Heart left ventricle (tissue), 16 donors: ENCODE measurements at regions of chr7 and their contacts with region 1.

Region 1: DNA sequence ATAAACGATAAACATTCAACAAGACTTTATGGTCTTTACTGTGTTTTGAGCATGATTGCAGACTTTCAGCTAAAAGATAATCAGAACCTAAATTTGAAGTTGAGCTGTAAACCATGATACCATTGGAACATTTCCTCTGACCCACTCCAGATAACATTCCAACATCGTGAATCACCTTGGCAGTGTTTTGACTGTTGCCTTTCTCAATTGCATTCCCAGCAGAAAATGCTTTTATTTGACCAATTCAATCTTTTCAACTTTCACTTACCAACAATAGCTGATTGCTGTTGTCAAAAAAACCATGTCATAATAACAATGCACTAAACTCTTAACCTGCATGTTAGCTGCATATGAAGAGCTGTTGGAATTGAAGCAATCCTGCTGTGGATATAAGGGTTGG is 165.5 kb downstream of the MDFIC start:
- DNase-seq: peak in 3 of 5 donors; percentile 26 to 33 (median 32)
- ATAC-seq: peak; percentile 79 to 87 (median 84)
- H3K4me3 ChIP-seq: no peak overlapping the region
- H3K27ac ChIP-seq: peak overlapping the region in 8 of 12 donors; percentile 8 to 61 (median 36)
- H3K4me1 ChIP-seq: peaks cover 0 to 32% (median 23%) of the 10 kb centered on the region in 12 donors
- H3K27me3 ChIP-seq: no peaks in the 10 kb centered on the region
- CTCF ChIP-seq: no peak
- POLR2A ChIP-seq: no peak

Region 2: GRCh38 chr7:114209968-114210367 is 877.5 kb before region 1 on chr7:
- intact Hi-C with region 1: no loop called
- DNase-seq: no peak
- ATAC-seq: no peak
- H3K4me3 ChIP-seq: no peak overlapping the region
- H3K27ac ChIP-seq: no peak overlapping the region
- H3K4me1 ChIP-seq: no peaks in the 10 kb centered on the region
- H3K27me3 ChIP-seq: no peaks in the 10 kb centered on the region
- CTCF ChIP-seq: no peak
- POLR2A ChIP-seq: no peak

Region 3: GRCh38 chr7:114979388-114979787 is 108.0 kb before region 1 on chr7:
- intact Hi-C with region 1: loop called in 3 of 10 experiments (anchors 5 to 10 kb)
- DNase-seq: peak in 4 of 5 donors; percentile 65 to 76 (median 70)
- ATAC-seq: peak; percentile 89 to 97 (median 94)
- H3K4me3 ChIP-seq: peak overlapping the region in 11 of 12 donors; percentile 4 to 49 (median 42)
- H3K27ac ChIP-seq: peak overlapping the region; percentile 45 to 80 (median 68)
- H3K4me1 ChIP-seq: peaks cover 0 to 65% (median 33%) of the 10 kb centered on the region in 12 donors
- H3K27me3 ChIP-seq: no peaks in the 10 kb centered on the region
- CTCF ChIP-seq: no peak
- POLR2A ChIP-seq: no peak

Region 4: GRCh38 chr7:114988755-114989375 is 98.6 kb before region 1 on chr7:
- intact Hi-C with region 1: loop called in 2 of 10 experiments (anchors 5 to 10 kb)
- DNase-seq: peak; percentile 56 to 81 (median 62)
- ATAC-seq: peak in 3 of 4 donors; percentile 79 to 92 (median 91)
- H3K4me3 ChIP-seq: no peak overlapping the region
- H3K27ac ChIP-seq: peak overlapping the region; percentile 6 to 78 (median 66)
- H3K4me1 ChIP-seq: peaks cover 0 to 59% (median 36%) of the 10 kb centered on the region in 12 donors
- H3K27me3 ChIP-seq: no peaks in the 10 kb centered on the region
- CTCF ChIP-seq: no peak
- POLR2A ChIP-seq: no peak

Region 5: DNA sequence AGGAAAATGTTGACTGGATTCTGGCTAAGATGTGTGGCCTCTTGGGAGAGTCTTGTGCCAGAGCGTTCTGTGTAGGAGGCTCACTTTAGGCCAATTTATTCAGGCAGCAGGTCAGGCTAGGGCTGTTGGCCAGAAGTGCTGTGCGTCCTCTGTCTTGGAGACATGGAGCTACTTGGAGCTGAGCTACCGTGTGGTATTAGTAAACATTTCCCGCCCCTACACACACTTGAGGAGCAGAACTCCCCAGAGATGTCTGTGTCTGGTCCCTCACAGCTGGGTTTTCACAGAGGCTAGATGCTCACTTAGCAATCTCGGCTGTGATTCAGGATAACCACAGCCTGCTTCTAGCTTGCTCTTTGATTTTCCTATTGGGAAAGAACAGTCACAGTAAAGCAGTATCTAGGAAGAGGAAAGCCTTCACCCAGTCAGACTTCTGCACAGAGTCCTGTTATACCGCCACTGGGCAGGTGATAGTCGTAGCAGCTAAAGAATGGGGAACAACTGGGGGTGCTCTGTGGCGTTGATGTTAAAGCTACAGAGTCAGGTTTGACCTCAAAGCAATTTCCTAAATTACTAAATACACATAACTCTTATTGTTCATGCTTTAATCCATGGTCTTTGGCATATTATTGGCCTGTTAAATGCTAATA is 78.8 kb before region 1 on chr7:
- intact Hi-C with region 1: loop called in 1 of 10 experiments (anchors 10 kb)
- DNase-seq: peak; percentile 80 to 89 (median 82)
- ATAC-seq: peak; percentile 90 to 94 (median 94)
- H3K4me3 ChIP-seq: no peak overlapping the region
- H3K27ac ChIP-seq: peak overlapping the region in 8 of 12 donors; percentile 5 to 72 (median 22)
- H3K4me1 ChIP-seq: peaks cover 0 to 61% (median 27%) of the 10 kb centered on the region in 12 donors
- H3K27me3 ChIP-seq: no peaks in the 10 kb centered on the region
- CTCF ChIP-seq: peak in 1 of 12 donors; percentile 14
- POLR2A ChIP-seq: no peak

Region 6: GRCh38 chr7:115099906-115100305 is 12.5 kb after region 1 on chr7:
- intact Hi-C with region 1: loop called in 1 of 10 experiments (anchors 1 kb)
- DNase-seq: no peak
- ATAC-seq: peak in 2 of 4 donors; percentile 52 to 64
- H3K4me3 ChIP-seq: no peak overlapping the region
- H3K27ac ChIP-seq: no peak overlapping the region
- H3K4me1 ChIP-seq: no peaks in the 10 kb centered on the region
- H3K27me3 ChIP-seq: no peaks in the 10 kb centered on the region
- CTCF ChIP-seq: no peak
- POLR2A ChIP-seq: no peak

Region 7: DNA sequence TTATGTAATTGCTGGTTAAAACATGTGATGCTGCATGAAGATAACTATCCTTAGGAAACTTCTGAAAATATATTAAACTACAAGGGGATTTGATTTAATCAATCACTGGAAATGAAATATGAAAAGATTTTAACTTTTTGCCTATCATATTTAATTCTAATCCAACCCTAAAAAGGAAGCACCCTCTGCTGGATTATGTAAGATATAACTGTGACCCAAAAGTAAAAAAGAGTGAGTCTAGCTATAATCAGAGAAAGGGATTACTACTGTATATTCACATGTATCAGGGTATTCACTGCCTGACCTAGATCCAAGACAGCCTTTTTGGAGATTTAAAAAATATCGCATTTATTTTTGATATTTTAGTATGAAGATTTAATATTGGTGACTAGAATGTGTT is 129.9 kb after region 1 on chr7:
- intact Hi-C with region 1: loop called in 1 of 10 experiments (anchors 10 kb)
- DNase-seq: no peak
- ATAC-seq: no peak
- H3K4me3 ChIP-seq: no peak overlapping the region
- H3K27ac ChIP-seq: no peak overlapping the region
- H3K4me1 ChIP-seq: peaks cover 0 to 6% (median 0%) of the 10 kb centered on the region in 12 donors
- H3K27me3 ChIP-seq: no peaks in the 10 kb centered on the region
- CTCF ChIP-seq: peak in 11 of 12 donors; percentile 18 to 59 (median 34)
- POLR2A ChIP-seq: no peak